RWPE1 (cell line): ENCODE measurements at regions of chr11 and their contacts with region 1.

Region 1: GRCh38 chr11:124763156-124763947 is 1.3 kb upstream of the ESAM start:
- DNase-seq: peak; percentile 64
- H3K27ac ChIP-seq: no peak overlapping the region
- CTCF ChIP-seq: peak; percentile 84

Region 2: GRCh38 chr11:124669193-124669592 is 94.2 kb before region 1 on chr11:
- CTCF ChIA-PET with region 1: interaction called, 18 read pairs
- POLR2A ChIA-PET with region 1: no interaction called
- DNase-seq: peak; percentile 71
- H3K27ac ChIP-seq: no peak overlapping the region
- CTCF ChIP-seq: peak; percentile 86

Region 3: GRCh38 chr11:124746621-124747243 is 16.6 kb before region 1 on chr11:
- CTCF ChIA-PET with region 1: interaction called, 13 read pairs
- POLR2A ChIA-PET with region 1: no interaction called
- DNase-seq: peak; percentile 94
- H3K27ac ChIP-seq: peak overlapping the region; percentile 36
- CTCF ChIP-seq: peak; percentile 73

Region 4: DNA sequence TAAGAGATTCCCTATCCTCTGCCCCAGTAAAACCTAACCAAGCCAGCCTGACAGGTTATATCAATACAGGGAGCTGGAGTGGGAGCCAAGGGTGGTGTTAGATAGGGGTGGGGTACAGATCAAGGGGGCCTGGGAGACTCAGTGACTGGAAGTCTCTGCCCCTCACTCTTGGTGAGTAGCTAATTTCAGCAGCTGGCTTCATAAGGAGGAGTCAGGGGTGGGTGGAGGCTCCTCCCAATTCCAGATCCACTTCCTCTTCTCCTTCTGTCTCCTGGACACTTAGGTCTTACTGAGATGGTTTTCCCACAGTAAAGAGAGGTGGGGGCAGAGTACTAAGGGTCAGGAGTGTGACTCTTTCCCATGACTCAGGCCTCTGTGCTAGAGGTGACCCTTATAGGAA is 10.1 kb before region 1 on chr11:
- CTCF ChIA-PET with region 1: interaction called, 11 read pairs
- POLR2A ChIA-PET with region 1: no interaction called
- DNase-seq: no peak
- H3K27ac ChIP-seq: no peak overlapping the region
- CTCF ChIP-seq: no peak

Region 5: GRCh38 chr11:124778281-124778680 is 14.9 kb after region 1 on chr11:
- CTCF ChIA-PET with region 1: interaction called, 10 read pairs
- POLR2A ChIA-PET with region 1: no interaction called
- DNase-seq: no peak
- H3K27ac ChIP-seq: no peak overlapping the region
- CTCF ChIP-seq: no peak

Region 6: GRCh38 chr11:124800226-124800929 is 37.0 kb after region 1 on chr11 and contains the start of gene MSANTD2:
- CTCF ChIA-PET with region 1: interaction called, 16 read pairs
- POLR2A ChIA-PET with region 1: no interaction called
- DNase-seq: peak; percentile 59
- H3K27ac ChIP-seq: peak within 1 kb of the TSS; percentile 91
- CTCF ChIP-seq: no peak